Right cardiac atrium (tissue), 5 donors: ENCODE measurements at regions of chr15 and their contacts with region 1.

Region 1: DNA sequence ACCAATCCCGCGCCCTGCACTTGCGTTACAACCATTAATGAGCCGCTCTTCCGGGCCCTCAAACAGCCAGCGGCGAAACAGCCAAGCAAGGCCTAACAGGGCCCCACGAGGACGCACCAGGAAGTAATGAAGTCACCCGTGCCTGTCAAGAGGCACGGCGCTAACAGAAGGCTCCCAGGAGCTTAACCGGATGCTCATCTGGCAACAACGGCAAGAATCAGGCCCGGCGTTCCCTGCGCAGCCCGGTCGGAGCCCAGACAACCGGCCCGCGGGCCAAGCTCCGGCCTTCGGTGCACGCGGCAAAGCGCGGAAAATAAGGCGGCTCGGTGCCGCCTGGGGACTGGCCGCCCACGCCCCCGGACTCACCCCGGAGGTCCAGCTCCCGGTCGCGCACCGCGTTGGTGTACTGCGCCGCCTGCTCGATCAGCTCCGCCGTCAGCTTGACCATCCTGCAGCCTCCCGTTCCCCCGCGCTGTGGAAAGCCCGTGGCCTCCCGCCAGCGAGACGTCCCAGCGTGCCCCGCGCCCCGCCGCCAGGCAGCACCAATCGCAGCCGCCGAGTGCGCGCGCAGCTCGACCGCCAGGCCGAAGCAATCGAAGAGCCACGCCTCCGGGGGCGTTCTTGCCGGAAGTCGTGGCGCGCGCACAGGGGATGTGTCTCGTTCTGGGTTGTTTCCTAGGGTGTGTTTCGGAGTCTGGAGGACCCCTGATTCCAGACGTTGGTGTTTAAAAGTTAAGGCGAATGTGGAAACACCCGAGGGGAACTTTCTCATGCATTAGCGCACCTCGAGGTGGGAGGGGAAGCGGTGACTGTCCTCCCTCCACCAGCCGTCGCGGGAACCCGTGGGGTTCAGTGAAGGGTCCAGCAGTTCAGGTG is at the start of gene SNRPA1:
- DNase-seq: peak; percentile 99 to 100 (median 100)
- ATAC-seq: peak; percentile 96 to 97
- H3K4me3 ChIP-seq: peak within 1 kb of the TSS; percentile 83
- H3K27ac ChIP-seq: peak within 1 kb of the TSS; percentile 75
- H3K4me1 ChIP-seq: no peaks in the 10 kb centered on the region
- H3K27me3 ChIP-seq: no peaks in the 10 kb centered on the region
- total RNA-seq, gene SNRPA1: 23.4 to 33.6 (median 27.7) TPM

Region 2: GRCh38 chr15:101115786-101116680 is 178.9 kb before region 1 on chr15:
- intact Hi-C with region 1: no loop called
- DNase-seq: peak in 2 of 3 donors; percentile 82
- ATAC-seq: peak; percentile 48 to 62
- H3K4me3 ChIP-seq: no peak overlapping the region
- H3K27ac ChIP-seq: no peak overlapping the region
- H3K4me1 ChIP-seq: peaks cover 3% of the 10 kb centered on the region
- H3K27me3 ChIP-seq: no peaks in the 10 kb centered on the region

Region 3: GRCh38 chr15:101127506-101128076 is 167.4 kb before region 1 on chr15:
- intact Hi-C with region 1: no loop called
- DNase-seq: peak; percentile 88 to 92 (median 89)
- ATAC-seq: peak; percentile 95 to 96
- H3K4me3 ChIP-seq: no peak overlapping the region
- H3K27ac ChIP-seq: peak overlapping the region; percentile 83
- H3K4me1 ChIP-seq: peaks cover 5% of the 10 kb centered on the region
- H3K27me3 ChIP-seq: no peaks in the 10 kb centered on the region

Region 4: DNA sequence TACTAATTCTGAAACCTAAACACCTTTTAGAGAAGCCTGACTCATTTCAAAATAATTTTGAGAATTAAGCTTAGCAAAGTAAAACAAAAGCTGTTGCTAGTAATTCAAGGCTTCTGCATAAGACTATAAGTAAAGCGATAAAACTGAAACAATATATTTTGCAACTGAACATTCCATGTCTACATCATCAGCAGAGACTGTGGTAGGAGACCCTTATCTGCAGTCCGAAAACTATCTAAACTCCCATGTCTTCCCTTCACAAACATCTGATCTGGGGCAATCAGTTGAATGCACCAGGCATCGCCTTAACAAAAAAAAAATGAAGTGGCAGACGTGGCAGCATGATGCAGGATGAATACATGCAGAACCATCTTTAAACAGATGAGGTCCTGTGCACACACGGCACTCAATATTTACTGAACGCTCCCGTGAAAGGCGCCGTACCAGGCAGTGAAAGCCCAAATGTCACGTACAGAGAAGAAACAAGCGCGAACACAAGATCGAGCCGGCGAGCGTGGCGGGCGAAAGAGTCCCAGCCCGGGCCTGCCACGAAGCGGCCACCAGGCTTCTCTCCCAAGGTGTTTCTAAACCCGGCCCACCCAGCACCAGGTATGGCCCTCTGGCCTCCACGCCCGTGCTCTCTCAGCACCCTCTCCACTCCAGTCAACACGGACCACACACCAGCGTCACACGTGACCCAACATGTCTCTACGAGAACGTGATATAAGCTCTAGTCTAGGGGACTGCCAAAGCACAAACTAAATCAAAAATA is 106.1 kb before region 1 on chr15:
- intact Hi-C with region 1: no loop called
- DNase-seq: peak; percentile 54 to 87 (median 78)
- ATAC-seq: peak; percentile 22 to 60
- H3K4me3 ChIP-seq: peak overlapping the region; percentile 65
- H3K27ac ChIP-seq: peak overlapping the region; percentile 89
- H3K4me1 ChIP-seq: peaks cover 19% of the 10 kb centered on the region
- H3K27me3 ChIP-seq: no peaks in the 10 kb centered on the region

Region 5: GRCh38 chr15:101251830-101252820 is 42.8 kb before region 1 on chr15 and contains the start of gene CHSY1:
- intact Hi-C with region 1: no loop called
- DNase-seq: peak; percentile 96 to 98 (median 97)
- ATAC-seq: peak; percentile 82 to 89
- H3K4me3 ChIP-seq: peak within 1 kb of the TSS; percentile 80
- H3K27ac ChIP-seq: peak within 1 kb of the TSS; percentile 82
- H3K4me1 ChIP-seq: peaks cover 3% of the 10 kb centered on the region
- H3K27me3 ChIP-seq: no peaks in the 10 kb centered on the region
- total RNA-seq, gene CHSY1: 24.5 to 44.7 (median 28.9) TPM

Region 6: DNA sequence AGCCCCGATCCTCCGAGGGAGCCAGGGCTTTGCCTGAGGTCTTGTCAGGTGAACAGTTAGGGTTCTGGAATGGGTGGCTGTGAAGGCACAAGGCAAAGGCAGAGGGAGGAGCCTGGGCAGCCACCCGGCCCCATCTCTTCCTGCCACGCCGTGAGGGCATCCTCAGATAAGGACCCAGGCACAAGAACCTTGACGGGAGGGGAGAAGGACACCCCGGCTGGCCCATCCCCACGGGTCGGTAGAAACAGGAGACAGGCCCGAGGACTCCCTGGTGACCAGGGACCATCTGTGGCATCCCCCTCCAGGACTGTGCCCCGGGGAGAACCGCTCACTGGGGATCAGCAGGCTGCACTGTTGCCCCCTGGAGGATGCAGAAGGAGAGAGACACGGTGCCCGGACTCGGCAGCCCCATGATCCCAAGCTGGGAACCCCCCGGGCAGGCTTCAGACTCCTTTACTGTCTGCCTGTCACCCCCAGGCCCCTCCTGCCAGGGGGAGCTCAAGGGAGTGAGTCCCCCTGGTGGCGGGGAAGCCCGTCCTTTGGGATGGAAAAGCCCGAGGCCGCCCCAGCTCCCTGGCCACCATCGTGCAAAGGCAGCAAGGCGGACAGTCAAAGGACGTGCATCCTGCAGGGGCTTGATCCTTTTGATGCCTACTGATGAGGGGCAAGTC is 206.9 kb after region 1 on chr15:
- intact Hi-C with region 1: loop called (anchors 5 to 10 kb)
- DNase-seq: peak in 2 of 3 donors; percentile 73 to 75
- ATAC-seq: peak; percentile 66 to 72
- H3K4me3 ChIP-seq: no peak overlapping the region
- H3K27ac ChIP-seq: no peak overlapping the region
- H3K4me1 ChIP-seq: no peaks in the 10 kb centered on the region
- H3K27me3 ChIP-seq: no peaks in the 10 kb centered on the region

Region 7: DNA sequence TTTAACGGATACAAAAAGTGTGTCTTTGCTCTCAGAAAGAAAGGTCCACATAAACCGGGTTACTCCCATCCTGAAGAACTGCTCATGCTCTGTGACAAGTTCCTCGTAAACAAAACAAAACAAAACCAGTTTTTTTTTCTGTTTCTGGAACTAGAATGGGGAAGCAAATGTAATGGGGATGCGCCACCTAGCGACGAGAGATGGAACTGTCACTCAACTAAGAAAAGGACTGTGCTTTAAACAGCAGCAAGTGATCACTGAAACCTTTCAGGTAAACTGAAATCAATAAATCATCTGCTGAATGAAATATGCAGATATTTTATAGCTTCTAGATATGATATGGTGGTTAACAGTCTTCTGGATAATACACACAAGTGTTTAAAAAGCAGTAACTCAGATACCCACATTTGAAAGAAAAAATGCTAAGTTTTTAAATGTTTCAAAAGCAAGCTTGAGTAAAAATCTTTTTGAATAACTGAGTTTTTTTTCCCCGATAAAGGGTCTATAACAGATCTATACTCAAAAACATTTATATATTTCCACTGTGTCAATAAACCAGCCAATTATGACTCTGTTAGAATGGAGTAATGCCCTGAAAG is 346.3 kb after region 1 on chr15:
- intact Hi-C with region 1: loop called (anchors 5 kb)
- DNase-seq: peak; percentile 64 to 85 (median 74)
- ATAC-seq: peak; percentile 57 to 68
- H3K4me3 ChIP-seq: no peak overlapping the region
- H3K27ac ChIP-seq: no peak overlapping the region
- H3K4me1 ChIP-seq: no peaks in the 10 kb centered on the region
- H3K27me3 ChIP-seq: no peaks in the 10 kb centered on the region

Region 8: DNA sequence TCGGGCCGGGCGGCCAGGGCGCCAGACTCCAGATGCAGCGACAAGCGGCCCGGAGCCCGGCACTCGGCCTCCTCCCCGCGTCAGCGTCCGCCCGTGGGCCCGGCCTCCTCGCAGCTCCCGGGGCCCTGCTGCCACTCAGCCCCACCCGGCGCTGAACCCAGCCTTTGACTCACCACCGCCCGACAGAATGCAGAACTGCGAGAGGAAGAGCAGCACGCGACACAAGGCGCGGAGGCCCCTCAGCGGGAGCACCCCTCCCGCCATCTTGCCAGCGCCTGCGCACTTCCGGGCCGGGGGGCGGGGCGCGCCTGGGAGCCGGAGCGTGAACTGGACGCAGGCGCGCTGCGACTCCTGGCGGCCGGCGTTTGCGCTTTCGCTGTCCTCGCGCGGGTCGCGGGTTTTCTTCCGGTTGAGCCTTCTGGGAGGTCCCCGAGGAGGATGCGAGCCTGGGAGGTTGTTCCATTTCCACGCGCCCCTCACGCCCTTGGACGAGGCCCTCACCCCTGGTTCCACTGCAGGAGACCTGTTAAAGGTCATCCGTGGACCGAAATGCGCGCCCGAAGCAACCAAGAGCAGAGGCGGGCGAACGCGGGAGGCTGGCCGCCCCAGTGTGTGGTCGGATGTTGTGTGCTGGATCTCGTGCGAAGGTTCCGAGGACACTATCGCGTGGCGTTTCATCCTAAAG is 357.3 kb after region 1 on chr15 and contains the start of gene TM2D3:
- intact Hi-C with region 1: loop called in 1 of 4 experiments (anchors 5 kb)
- DNase-seq: peak; percentile 95 to 99 (median 98)
- ATAC-seq: peak; percentile 97 to 98
- H3K4me3 ChIP-seq: peak within 1 kb of the TSS; percentile 76
- H3K27ac ChIP-seq: peak within 1 kb of the TSS; percentile 95
- H3K4me1 ChIP-seq: peaks cover 5% of the 10 kb centered on the region
- H3K27me3 ChIP-seq: no peaks in the 10 kb centered on the region
- total RNA-seq, gene TM2D3: 36.5 to 49.2 (median 42.3) TPM